GM10248 (cell line): ENCODE measurements at regions of chr16 and their contacts with region 1.

Region 1: DNA sequence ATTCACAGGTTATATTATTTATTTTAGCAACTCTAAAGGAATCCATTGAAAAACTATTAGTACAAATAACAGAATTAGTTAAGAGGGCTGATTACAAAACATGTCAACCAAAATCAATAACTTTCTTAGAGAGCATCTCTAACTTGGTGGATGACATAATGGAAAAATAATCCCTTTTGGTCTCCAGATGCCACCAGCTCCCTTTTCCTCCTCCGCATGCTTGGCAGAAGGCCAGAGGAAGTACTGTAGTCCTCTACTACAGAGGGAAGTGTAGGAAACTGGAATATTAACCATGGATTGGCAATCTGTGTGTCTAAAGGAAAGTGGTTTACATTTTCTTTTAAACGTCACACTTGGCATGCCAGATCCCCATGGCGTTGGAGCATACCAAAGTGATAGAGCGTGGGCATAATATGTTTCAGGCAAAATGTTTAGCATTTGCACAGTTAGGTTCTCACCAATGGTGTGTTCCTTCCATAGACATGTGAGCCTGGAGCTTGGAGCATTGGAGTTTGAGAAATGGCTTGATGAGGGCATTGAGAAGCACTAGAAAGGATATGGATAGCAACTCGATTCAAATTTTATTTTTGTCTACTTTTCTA is 106.3 kb downstream of the PRKCB start:
- DNase-seq: no peak
- CTCF ChIP-seq: no peak

Region 2: DNA sequence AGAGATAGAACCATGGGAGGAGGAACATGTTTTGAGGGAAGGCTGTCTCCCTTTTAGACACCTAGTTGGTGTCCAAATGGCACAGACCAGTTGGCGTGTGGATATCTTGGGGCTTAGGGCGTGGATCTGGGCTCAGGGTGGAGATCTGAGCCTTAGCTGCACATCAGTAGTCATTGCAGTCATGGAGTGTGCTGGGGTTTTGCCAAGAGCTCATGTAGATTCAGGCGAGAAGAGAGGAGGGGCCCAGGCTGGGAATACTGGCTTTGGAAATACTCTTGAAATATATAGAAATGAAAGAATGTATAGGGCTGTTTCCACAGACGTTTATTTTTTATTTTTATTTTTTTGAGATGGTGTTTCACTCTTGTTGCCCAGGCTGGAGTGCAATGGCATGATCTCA is 14.3 kb before region 1 on chr16:
- CTCF ChIA-PET with region 1: interaction called, 10 read pairs
- POLR2A ChIA-PET with region 1: no interaction called
- DNase-seq: no peak
- CTCF ChIP-seq: no peak

Region 3: GRCh38 chr16:24139282-24139681 is 197.2 kb after region 1 on chr16:
- CTCF ChIA-PET with region 1: no interaction called
- POLR2A ChIA-PET with region 1: no interaction called
- DNase-seq: no peak
- CTCF ChIP-seq: no peak